Colonic mucosa (tissue), 4 donors: ENCODE measurements at regions of chr12 and their contacts with region 1.

Region 1: DNA sequence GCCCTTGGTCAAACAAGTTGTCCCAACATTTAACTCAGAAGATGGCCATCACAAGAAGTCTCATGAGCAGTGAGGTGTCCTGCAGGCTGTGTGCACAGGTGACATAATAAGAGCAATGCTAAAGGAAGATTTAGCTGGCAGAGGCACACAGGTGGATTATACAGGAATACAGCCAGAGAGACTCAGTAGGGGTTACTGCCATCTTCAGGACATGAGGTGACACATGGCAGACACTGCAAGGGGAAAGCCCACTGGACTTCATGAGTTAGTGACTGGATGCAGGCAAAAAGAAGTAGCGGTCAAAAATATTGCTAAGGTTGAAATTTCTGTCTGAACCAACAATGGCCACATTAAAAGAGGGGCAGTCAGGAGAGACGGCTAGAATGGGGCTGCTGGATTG is 48.3 kb downstream of the RPAP3 start:
- DNase-seq: no peak
- H3K4me3 ChIP-seq: no peak overlapping the region
- H3K27ac ChIP-seq: no peak overlapping the region
- H3K4me1 ChIP-seq: no peaks in the 10 kb centered on the region
- H3K27me3 ChIP-seq: no peaks in the 10 kb centered on the region
- CTCF ChIP-seq: no peak

Region 2: GRCh38 chr12:47844274-47845019 is 186.9 kb after region 1 on chr12:
- intact Hi-C with region 1: loop called (anchors 5 kb)
- DNase-seq: no peak
- H3K4me3 ChIP-seq: no peak overlapping the region
- H3K27ac ChIP-seq: no peak overlapping the region
- H3K4me1 ChIP-seq: no peaks in the 10 kb centered on the region
- H3K27me3 ChIP-seq: no peaks in the 10 kb centered on the region
- CTCF ChIP-seq: no peak

Region 3: DNA sequence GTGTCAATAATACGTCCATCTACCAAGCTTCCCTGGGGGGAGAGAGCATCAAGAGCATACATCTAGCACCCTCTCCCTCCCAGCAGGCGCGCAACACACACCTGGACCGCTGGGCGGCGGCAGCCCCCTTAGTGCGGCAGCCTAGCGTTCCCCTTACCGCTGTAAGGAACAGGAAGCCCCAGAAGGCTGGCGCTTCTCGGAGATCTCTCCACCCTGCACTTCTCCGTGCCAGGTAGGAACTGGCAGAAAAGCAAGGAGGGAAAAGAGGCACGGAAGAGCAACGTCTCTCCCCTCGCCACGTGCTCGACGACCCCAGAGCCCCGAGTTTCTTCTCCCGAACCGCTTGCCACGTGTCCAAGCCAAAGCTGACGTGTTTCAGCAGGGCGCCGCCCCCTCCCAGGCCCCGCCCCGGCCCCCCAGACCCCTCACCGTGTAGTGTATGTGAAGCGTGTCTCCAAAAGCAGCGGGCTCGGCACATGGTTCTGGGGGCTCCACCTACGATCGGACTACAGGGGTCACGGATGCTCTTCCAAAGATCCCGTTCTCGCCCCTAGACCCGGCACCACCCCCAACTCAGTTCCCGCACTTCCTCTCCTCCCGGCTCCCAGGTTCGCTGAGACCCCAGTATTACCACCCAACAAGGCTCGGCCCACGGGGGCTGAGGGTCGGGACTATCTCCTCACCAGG is 1267.2 kb after region 1 on chr12:
- intact Hi-C with region 1: no loop called
- DNase-seq: peak; percentile 61
- H3K4me3 ChIP-seq: peak overlapping the region; percentile 96
- H3K27ac ChIP-seq: peak overlapping the region; percentile 60
- H3K4me1 ChIP-seq: no peaks in the 10 kb centered on the region
- H3K27me3 ChIP-seq: no peaks in the 10 kb centered on the region
- CTCF ChIP-seq: peak; percentile 38